Colonic mucosa (tissue), 4 donors: ENCODE measurements at regions of chr1 and their contacts with region 1.

Region 1: DNA sequence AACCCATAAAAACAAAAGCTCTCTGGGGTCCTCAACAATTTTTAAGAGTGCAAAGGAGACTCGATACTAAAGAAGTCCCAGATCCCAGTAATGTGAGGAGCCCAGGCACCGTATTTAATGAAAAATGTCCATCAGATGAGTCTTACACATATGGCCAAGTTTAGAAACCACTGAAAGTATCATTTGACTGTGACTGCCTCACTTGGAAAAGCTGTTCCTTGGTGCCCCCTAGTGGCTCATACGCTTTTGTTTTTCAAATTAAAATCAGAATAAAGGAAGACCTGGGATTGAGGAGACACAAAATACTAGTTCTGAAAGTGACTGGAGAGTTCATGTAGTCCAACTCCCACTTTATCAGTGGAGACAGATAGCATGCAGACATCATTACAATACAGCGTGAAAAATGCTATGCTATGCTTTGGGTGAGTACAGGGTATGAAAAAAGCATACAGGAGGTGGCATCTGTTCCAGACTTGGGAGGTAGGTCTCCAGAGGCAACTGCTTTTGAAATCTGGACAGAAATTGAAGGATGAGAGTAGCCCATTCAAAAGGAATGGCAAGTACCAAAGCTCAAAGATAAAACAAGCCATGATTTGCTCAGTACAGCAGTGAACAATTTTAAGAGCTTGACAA is 33.8 kb downstream of the GDAP2 start:
- DNase-seq: peak; percentile 75
- H3K4me3 ChIP-seq: no peak overlapping the region
- H3K27ac ChIP-seq: no peak overlapping the region
- H3K4me1 ChIP-seq: no peaks in the 10 kb centered on the region
- H3K27me3 ChIP-seq: no peaks in the 10 kb centered on the region
- CTCF ChIP-seq: peak; percentile 68

Region 2: GRCh38 chr1:117512743-117513321 is 382.8 kb before region 1 on chr1:
- intact Hi-C with region 1: loop called (anchors 5 kb)
- DNase-seq: no peak
- H3K4me3 ChIP-seq: no peak overlapping the region
- H3K27ac ChIP-seq: no peak overlapping the region
- H3K4me1 ChIP-seq: no peaks in the 10 kb centered on the region
- H3K27me3 ChIP-seq: no peaks in the 10 kb centered on the region
- CTCF ChIP-seq: peak; percentile 34

Region 3: GRCh38 chr1:117857434-117857833 is 38.2 kb before region 1 on chr1:
- intact Hi-C with region 1: no loop called
- DNase-seq: no peak
- H3K4me3 ChIP-seq: no peak overlapping the region
- H3K27ac ChIP-seq: no peak overlapping the region
- H3K4me1 ChIP-seq: no peaks in the 10 kb centered on the region
- H3K27me3 ChIP-seq: no peaks in the 10 kb centered on the region
- CTCF ChIP-seq: no peak